Calu3 (cell line): ENCODE measurements at regions of chr12 and their contacts with region 1.

Region 1: GRCh38 chr12:69348162-69348938 is at the start of gene LYZ:
- DNase-seq: peak; percentile 81
- H3K4me3 Mint-ChIP-seq: peak within 1 kb of the TSS; percentile 75
- H3K27ac Mint-ChIP-seq: peak within 1 kb of the TSS; percentile 92
- H3K4me1 Mint-ChIP-seq: peaks cover 12% of the 10 kb centered on the region
- H3K27me3 Mint-ChIP-seq: no peaks in the 10 kb centered on the region
- CTCF ChIP-seq: no peak
- total RNA-seq, gene LYZ: 353 and 392 TPM in 2 replicates

Region 2: DNA sequence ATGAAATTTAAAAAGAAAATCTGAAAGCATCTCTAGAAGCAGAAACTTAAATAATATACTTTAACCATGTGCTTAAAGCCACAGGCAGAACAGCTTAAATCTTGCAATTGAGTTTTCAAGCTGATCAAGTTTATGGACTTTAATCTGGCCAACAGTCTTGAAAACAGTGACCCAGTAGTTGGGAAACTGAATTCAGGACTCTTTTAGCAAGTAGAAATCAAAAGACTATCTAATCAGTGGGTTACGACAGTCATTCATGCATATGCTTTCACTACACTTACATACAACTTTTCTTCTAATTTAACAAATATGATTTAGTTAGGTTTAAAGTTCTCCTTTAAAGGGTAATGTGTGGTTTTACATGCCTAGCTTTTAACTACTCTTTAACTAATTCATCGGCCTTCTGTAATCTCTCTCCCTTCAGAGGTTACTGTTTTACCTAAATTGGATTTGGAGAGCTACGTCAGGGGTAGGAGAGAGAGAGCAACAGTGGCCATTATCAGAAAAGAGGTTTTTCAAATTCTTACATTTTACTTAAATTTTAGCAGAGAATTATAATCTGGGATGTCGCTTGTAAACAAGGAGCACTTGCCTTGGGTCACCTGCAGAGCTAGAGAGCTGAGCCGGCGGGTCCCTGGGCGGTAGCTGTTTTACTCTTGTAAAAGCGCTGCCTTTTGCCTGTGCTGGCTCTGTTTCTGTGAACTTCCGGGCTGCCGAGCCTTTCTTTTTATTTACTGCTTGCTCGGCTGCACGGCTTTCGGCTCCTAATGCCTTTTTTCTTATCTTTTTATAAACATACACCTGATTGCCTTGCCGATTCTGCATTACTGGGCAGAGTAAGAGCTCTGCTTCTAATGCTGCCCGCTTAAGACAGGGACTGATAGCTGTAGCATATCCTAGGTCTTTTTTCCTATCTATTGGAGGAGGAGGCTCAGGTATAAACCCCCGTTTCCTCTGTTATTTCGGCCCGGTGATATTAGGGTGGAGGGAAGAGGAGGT is 17.6 kb before region 1 on chr12:
- CTCF ChIA-PET with region 1: interaction called, 11 read pairs
- intact Hi-C with region 1: loop called (anchors 1 kb)
- DNase-seq: peak; percentile 49
- H3K4me3 Mint-ChIP-seq: peak overlapping the region; percentile 82
- H3K27ac Mint-ChIP-seq: peak overlapping the region; percentile 90
- H3K4me1 Mint-ChIP-seq: peaks cover 51% of the 10 kb centered on the region
- H3K27me3 Mint-ChIP-seq: no peaks in the 10 kb centered on the region
- CTCF ChIP-seq: no peak